WTC11 (cell line): ENCODE measurements at regions of chr12 and their contacts with region 1.

Region 1: GRCh38 chr12:131454418-131455217 is 256.3 kb upstream of the SFSWAP start:
- DNase-seq: peak; percentile 82
- ATAC-seq: peak; percentile 89
- H3K4me3 Mint-ChIP-seq: no peak overlapping the region
- H3K27ac Mint-ChIP-seq: no peak overlapping the region
- H3K4me1 Mint-ChIP-seq: peaks cover 15% of the 10 kb centered on the region; the same call in 1 of the 2 replicates
- H3K27me3 Mint-ChIP-seq: no peaks in the 10 kb centered on the region
- CTCF ChIP-seq: peak; percentile 85

Region 2: GRCh38 chr12:131116391-131117117 is 338.1 kb before region 1 on chr12:
- CTCF ChIA-PET with region 1: interaction called, 12 read pairs
- POLR2A ChIA-PET with region 1: no interaction called
- DNase-seq: peak; percentile 64
- ATAC-seq: peak; percentile 85
- H3K4me3 Mint-ChIP-seq: no peak overlapping the region
- H3K27ac Mint-ChIP-seq: no peak overlapping the region
- H3K4me1 Mint-ChIP-seq: peaks cover 13% of the 10 kb centered on the region
- H3K27me3 Mint-ChIP-seq: 0 out of 2 replicates have a peak, but pooled peaks cover 4% of the 10 kb centered on the region
- CTCF ChIP-seq: no peak

Region 3: DNA sequence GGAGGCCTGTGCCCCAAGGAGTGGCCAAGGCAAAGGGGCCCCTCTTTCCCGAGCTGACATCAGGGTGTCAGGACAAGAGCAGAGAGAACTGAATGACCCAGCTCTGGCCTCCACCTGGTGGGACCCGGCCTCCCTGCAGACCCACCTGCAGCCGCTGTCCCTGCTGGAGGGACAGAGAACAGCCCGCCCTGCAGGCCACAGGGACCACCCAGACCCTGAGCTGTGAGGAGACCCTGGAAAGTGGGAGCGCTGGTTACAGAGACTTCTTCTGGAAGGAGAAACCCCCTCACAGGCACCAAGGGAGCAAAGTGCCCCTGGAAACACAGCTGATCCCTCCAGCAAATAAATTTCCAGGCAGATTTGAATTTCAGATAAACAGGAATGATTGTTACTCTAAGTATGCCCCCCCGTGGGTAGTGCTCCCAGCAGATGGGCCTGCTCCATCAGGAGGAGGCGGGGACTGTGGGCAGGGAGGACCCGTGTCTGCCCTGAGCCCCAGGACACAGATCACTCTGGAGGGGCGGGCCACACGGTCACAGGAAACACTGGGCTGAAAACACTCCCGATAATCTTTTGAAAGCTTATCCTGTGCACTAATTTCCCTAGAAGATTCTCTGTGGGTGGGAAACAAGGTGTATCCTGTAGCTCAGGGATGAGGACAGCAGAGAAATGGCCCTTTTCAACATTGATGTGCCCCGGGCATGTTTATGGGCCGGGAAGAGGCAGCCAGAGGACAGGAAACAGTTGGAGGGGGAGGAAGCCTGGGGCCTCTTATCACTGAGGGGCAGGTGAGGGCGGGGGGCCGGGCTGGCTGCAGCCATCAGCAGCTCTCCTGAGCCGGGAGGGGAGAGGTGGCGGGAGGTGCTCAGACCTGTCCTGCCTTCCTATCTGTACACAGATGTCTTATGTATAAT is 224.9 kb before region 1 on chr12:
- CTCF ChIA-PET with region 1: interaction called, 10 read pairs
- POLR2A ChIA-PET with region 1: no interaction called
- DNase-seq: peak; percentile 60
- ATAC-seq: peak; percentile 79
- H3K4me3 Mint-ChIP-seq: peak overlapping the region; percentile 36
- H3K27ac Mint-ChIP-seq: peak overlapping the region; percentile 95
- H3K4me1 Mint-ChIP-seq: peaks cover 34% of the 10 kb centered on the region
- H3K27me3 Mint-ChIP-seq: no peaks in the 10 kb centered on the region; the same call in 1 of the 2 replicates
- CTCF ChIP-seq: no peak

Region 4: GRCh38 chr12:131397493-131398181 is 57.0 kb before region 1 on chr12:
- CTCF ChIA-PET with region 1: no interaction called
- POLR2A ChIA-PET with region 1: no interaction called
- DNase-seq: no peak
- ATAC-seq: no peak
- H3K4me3 Mint-ChIP-seq: no peak overlapping the region
- H3K27ac Mint-ChIP-seq: no peak overlapping the region
- H3K4me1 Mint-ChIP-seq: peaks cover 4% of the 10 kb centered on the region; the same call in 1 of the 2 replicates
- H3K27me3 Mint-ChIP-seq: peaks cover 25% of the 10 kb centered on the region
- CTCF ChIP-seq: no peak

Region 5: DNA sequence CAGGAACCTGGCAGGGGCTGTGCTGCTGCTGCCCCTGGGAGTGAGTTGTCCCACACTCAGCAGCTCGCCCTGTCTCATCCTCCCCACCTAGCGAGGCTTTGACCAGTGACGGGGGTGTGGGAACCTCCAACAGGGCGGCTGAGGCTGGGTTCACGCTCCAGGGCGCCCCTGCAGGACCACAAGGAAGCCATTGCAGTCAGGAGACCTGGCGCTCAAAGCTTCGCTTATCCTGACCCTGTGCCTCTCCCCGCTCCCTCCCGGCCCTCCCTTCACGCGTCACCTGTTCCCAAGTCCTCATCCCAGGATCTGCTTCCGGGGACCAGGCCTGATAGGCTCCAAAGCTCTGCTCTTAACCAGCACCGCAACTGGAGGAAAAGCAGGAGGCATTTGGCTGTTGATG is 15.7 kb before region 1 on chr12:
- CTCF ChIA-PET with region 1: interaction called, 19 read pairs
- POLR2A ChIA-PET with region 1: no interaction called
- DNase-seq: peak; percentile 62
- ATAC-seq: peak; percentile 67
- H3K4me3 Mint-ChIP-seq: no peak overlapping the region
- H3K27ac Mint-ChIP-seq: no peak overlapping the region
- H3K4me1 Mint-ChIP-seq: peaks cover 26% of the 10 kb centered on the region
- H3K27me3 Mint-ChIP-seq: no peaks in the 10 kb centered on the region
- CTCF ChIP-seq: no peak